Right ventricle myocardium superior (tissue), 1 donor: ENCODE measurements at regions of chrX and their contacts with region 1.

Region 1: GRCh38 chrX:17046478-17047097 is 100.1 kb downstream of the REPS2 start:
- DNase-seq: peak; percentile 36
- ATAC-seq: peak; percentile 79

Region 2: DNA sequence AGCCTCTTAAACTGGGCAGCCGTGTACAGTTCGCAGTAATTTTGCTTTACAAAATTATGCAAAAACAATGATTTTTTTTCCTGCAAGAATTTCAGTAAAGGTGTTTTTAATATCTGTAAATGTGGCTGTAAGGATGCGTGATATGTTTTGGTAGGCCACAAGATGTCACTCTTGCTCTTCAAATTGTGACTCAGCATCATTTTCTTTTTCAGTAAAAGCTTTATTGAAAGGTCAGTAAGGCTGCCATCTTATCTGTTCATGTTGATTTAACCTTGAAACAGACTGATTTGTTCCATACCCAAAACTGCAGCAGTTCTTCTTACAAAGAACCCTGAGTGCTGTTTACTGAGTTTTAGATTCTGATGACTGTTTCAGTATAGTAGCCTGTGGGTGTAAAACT is 220.4 kb before region 1 on chrX:
- intact Hi-C with region 1: loop called (anchors 5 kb)
- DNase-seq: no peak
- ATAC-seq: no peak

Region 3: DNA sequence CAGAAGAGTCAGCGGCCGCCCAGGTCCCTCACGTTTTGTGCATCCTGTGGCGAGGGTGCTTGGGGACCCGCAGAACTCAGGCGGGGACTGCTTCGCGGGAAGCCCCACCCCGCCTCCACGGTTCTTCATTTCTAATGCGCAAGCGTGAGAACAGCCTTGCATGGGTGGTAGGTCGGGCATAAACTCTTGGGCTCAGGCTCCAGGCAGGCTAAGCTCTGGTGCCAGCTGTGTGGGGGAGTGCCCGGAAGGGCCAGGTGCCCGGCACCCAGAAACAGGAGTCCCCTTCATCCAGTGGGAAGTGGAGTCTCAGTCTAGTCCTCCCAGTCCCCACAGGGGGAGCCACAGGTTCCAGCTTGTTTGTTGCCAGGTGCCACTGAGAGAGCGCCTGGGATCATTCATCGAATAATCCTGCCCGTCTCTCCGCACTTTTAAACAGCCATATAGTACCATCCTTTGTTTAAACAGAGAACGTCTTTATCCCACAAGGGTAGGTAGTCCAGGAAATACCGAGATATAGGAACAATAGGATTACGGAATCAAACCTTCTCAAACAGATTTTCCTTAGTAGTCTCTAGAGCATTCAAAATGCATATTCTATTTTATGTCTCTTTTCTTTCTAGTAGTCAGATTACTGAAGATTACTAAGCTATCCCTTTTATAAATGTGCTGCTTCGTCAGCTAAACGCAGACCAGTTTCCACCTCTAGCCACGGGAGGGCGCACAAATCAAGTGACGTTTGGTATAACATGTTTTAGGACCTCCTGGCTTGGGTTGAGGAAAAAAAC is 163.7 kb before region 1 on chrX:
- intact Hi-C with region 1: loop called (anchors 5 kb)
- DNase-seq: peak; percentile 75
- ATAC-seq: peak; percentile 87

Region 4: GRCh38 chrX:17214962-17215361 is 168.4 kb after region 1 on chrX:
- intact Hi-C with region 1: no loop called
- DNase-seq: no peak
- ATAC-seq: no peak